Mammary epithelial cell (primary cell): ENCODE measurements at regions of chrX and their contacts with region 1.

Region 1: GRCh38 chrX:105975382-105975781 is 63.1 kb downstream of the SERPINA7 start:
- DNase-seq: peak; percentile 14
- H3K4me3 ChIP-seq: no peak overlapping the region
- H3K27ac ChIP-seq: no peak overlapping the region
- H3K4me1 ChIP-seq: no peaks in the 10 kb centered on the region
- H3K27me3 ChIP-seq: peaks cover 2% of the 10 kb centered on the region
- CTCF ChIP-seq: peak; percentile 34 to 51

Region 2: GRCh38 chrX:105618393-105619101 is 356.8 kb before region 1 on chrX:
- CTCF ChIA-PET with region 1: no interaction called
- dilution Hi-C with region 1: no loop called
- in situ Hi-C with region 1: no loop called
- intact Hi-C with region 1: no loop called
- DNase-seq: peak; percentile 67
- H3K4me3 ChIP-seq: no peak overlapping the region
- H3K27ac ChIP-seq: peak overlapping the region; percentile 9
- H3K4me1 ChIP-seq: peaks cover 3% of the 10 kb centered on the region
- H3K27me3 ChIP-seq: no peaks in the 10 kb centered on the region
- CTCF ChIP-seq: no peak

Region 3: GRCh38 chrX:105910627-105911026 is 64.8 kb before region 1 on chrX:
- CTCF ChIA-PET with region 1: no interaction called
- dilution Hi-C with region 1: no loop called
- in situ Hi-C with region 1: no loop called
- intact Hi-C with region 1: no loop called
- DNase-seq: no peak
- H3K4me3 ChIP-seq: no peak overlapping the region
- H3K27ac ChIP-seq: no peak overlapping the region
- H3K4me1 ChIP-seq: peaks cover 3% of the 10 kb centered on the region
- H3K27me3 ChIP-seq: no peaks in the 10 kb centered on the region
- CTCF ChIP-seq: no peak

Region 4: GRCh38 chrX:106039920-106040319 is 64.5 kb after region 1 on chrX:
- CTCF ChIA-PET with region 1: interaction called, 3 read pairs
- dilution Hi-C with region 1: no loop called
- in situ Hi-C with region 1: no loop called
- intact Hi-C with region 1: loop called (anchors 1 kb)
- DNase-seq: peak; percentile 17
- H3K4me3 ChIP-seq: no peak overlapping the region
- H3K27ac ChIP-seq: no peak overlapping the region
- H3K4me1 ChIP-seq: no peaks in the 10 kb centered on the region
- H3K27me3 ChIP-seq: peaks cover 4% of the 10 kb centered on the region
- CTCF ChIP-seq: peak; percentile 56 to 74

Region 5: DNA sequence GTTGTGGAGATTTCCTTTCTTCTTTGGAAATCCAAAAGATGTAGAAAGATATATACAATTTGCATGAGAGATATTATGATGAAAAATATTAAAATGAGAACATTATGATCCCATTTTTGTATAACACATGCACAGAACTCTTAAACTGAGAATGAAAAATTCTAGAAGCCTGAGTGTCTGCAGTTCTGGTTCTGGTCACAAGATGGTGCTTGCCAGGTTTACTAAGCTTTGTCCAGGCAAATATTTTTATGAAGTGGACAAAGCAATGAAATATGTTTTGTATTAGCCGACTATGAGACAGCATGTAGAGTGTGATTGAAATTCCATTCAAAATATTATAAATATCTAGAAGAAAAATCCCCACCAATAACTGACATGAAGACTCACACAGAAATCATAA is 194.9 kb after region 1 on chrX:
- CTCF ChIA-PET with region 1: no interaction called
- dilution Hi-C with region 1: no loop called
- in situ Hi-C with region 1: no loop called
- intact Hi-C with region 1: loop called (anchors 10 kb)
- DNase-seq: peak; percentile 8
- H3K4me3 ChIP-seq: no peak overlapping the region
- H3K27ac ChIP-seq: no peak overlapping the region
- H3K4me1 ChIP-seq: no peaks in the 10 kb centered on the region
- H3K27me3 ChIP-seq: peaks cover 2% of the 10 kb centered on the region
- CTCF ChIP-seq: peak; percentile 61 to 73

Region 6: DNA sequence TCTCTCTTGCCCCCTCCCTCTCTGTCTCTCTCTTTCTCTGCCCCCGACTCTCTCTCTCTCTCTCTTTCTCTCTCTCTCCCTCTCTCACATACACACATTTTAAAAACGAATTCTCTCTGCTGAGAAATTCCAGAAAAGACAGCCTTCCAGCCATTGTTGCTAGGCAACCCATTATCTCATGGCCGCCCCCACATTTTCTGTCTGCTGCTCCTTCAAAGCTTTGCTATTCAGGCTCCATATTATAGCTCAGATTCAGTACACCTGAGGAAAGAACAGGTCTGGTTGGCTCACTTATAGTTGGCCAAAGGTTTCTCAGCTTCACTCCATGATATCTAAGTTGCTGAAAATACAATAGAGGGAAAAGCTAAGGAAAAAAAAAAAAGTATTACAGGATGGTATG is 462.0 kb after region 1 on chrX:
- CTCF ChIA-PET with region 1: no interaction called
- dilution Hi-C with region 1: no loop called
- in situ Hi-C with region 1: no loop called
- intact Hi-C with region 1: no loop called
- DNase-seq: no peak
- H3K4me3 ChIP-seq: no peak overlapping the region
- H3K27ac ChIP-seq: no peak overlapping the region
- H3K4me1 ChIP-seq: no peaks in the 10 kb centered on the region
- H3K27me3 ChIP-seq: peaks cover 3% of the 10 kb centered on the region
- CTCF ChIP-seq: no peak